ENCODE measurements at regions of chr15 and their contacts with region 1.

Region 1: GRCh38 chr15:68154923-68155559 is 50.1 kb downstream of the CALML4 start:
- DNase-seq: peak; percentile 66
- H3K4me3 ChIP-seq: no peak overlapping the region
- H3K27ac ChIP-seq: no peak overlapping the region
- H3K4me1 ChIP-seq: no peaks in the 10 kb centered on the region
- H3K27me3 ChIP-seq: no peaks in the 10 kb centered on the region
- CTCF ChIP-seq: peak; percentile 73 to 80 (median 73)
- POLR2A ChIP-seq: no peak

Region 2: GRCh38 chr15:67863442-67863987 is 291.5 kb before region 1 on chr15:
- intact Hi-C with region 1: loop called (anchors 10 kb)
- DNase-seq: peak; percentile 89
- H3K4me3 ChIP-seq: peak overlapping the region; percentile 53 to 59
- H3K27ac ChIP-seq: peak overlapping the region; percentile 4 to 77
- H3K4me1 ChIP-seq: peaks cover 4% of the 10 kb centered on the region
- H3K27me3 ChIP-seq: no peaks in the 10 kb centered on the region
- CTCF ChIP-seq: peak; percentile 91 to 98 (median 95)
- POLR2A ChIP-seq: no peak

Region 3: GRCh38 chr15:68080783-68081182 is 74.3 kb before region 1 on chr15:
- intact Hi-C with region 1: no loop called
- DNase-seq: no peak
- H3K4me3 ChIP-seq: no peak overlapping the region
- H3K27ac ChIP-seq: no peak overlapping the region
- H3K4me1 ChIP-seq: peaks cover 12% of the 10 kb centered on the region
- H3K27me3 ChIP-seq: no peaks in the 10 kb centered on the region
- CTCF ChIP-seq: no peak
- POLR2A ChIP-seq: no peak

Measured in testis (tissue), 5 donors.